WTC11 (cell line): ENCODE measurements at regions of chr21 and their contacts with region 1.

Region 1: GRCh38 chr21:36976882-36977651 is 10.6 kb upstream of the HLCS start:
- DNase-seq: peak; percentile 33
- ATAC-seq: peak; percentile 72
- H3K4me3 Mint-ChIP-seq: no peak overlapping the region
- H3K27ac Mint-ChIP-seq: no peak overlapping the region
- H3K4me1 Mint-ChIP-seq: peaks cover 16% of the 10 kb centered on the region
- H3K27me3 Mint-ChIP-seq: peaks cover 27% of the 10 kb centered on the region
- CTCF ChIP-seq: peak; percentile 34; the same call in 1 of the 2 replicates

Region 2: GRCh38 chr21:36917471-36918158 is 59.5 kb before region 1 on chr21:
- CTCF ChIA-PET with region 1: no interaction called
- POLR2A ChIA-PET with region 1: no interaction called
- DNase-seq: peak; percentile 43
- ATAC-seq: peak; percentile 81
- H3K4me3 Mint-ChIP-seq: no peak overlapping the region
- H3K27ac Mint-ChIP-seq: no peak overlapping the region
- H3K4me1 Mint-ChIP-seq: peaks cover 46% of the 10 kb centered on the region
- H3K27me3 Mint-ChIP-seq: no peaks in the 10 kb centered on the region
- CTCF ChIP-seq: 0 out of 2 replicates have a peak, but pooled peaks have one; percentile 14

Region 3: GRCh38 chr21:36966066-36966820 is 10.8 kb before region 1 on chr21 and contains the start of gene HLCS:
- CTCF ChIA-PET with region 1: interaction called, 21 read pairs
- POLR2A ChIA-PET with region 1: no interaction called
- DNase-seq: peak; percentile 73
- ATAC-seq: peak; percentile 90
- H3K4me3 Mint-ChIP-seq: peak within 1 kb of the TSS; percentile 75
- H3K27ac Mint-ChIP-seq: peak within 1 kb of the TSS; percentile 74
- H3K4me1 Mint-ChIP-seq: peaks cover 13% of the 10 kb centered on the region
- H3K27me3 Mint-ChIP-seq: no peaks in the 10 kb centered on the region
- CTCF ChIP-seq: no peak
- total RNA-seq, gene HLCS: 9.3 to 11.1 TPM (median 10.9 TPM) in 3 replicates

Region 4: GRCh38 chr21:36989699-36990507 is 12.8 kb after region 1 on chr21:
- CTCF ChIA-PET with region 1: interaction called, 48 read pairs
- POLR2A ChIA-PET with region 1: no interaction called
- DNase-seq: peak; percentile 92
- ATAC-seq: peak; percentile 87
- H3K4me3 Mint-ChIP-seq: peak overlapping the region; percentile 76
- H3K27ac Mint-ChIP-seq: peak overlapping the region; percentile 94
- H3K4me1 Mint-ChIP-seq: peaks cover 30% of the 10 kb centered on the region
- H3K27me3 Mint-ChIP-seq: peaks cover 18% of the 10 kb centered on the region
- CTCF ChIP-seq: peak; percentile 78

Region 5: DNA sequence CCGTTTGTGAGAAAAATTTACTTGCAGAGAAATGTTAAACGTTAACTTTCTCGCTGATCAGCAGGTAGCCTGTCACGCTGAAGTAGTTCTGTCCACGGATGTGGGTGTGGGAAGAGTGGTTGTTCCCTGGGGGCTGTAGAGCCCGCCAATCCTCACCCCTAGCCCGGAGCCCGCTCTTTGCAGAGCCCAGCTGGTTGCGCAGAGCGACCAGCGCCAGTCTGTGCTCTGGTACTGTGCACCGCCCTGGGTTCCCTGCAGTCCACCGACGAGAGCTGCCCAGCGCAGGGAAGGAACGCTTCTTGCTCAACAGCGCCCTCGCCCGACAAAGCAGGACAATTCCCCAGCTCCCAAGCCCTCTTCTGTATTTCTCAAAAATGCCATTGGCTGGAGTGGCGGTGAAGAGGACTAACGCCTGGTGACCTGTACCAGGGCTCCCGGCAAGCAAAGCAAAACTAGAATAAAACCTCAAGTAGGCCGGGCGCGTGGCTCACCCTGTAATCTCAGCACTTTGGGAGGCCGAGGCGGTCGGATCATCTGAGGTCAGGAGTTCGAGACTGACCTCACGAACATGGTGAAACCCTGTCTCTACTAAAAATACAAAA is 32.8 kb after region 1 on chr21:
- CTCF ChIA-PET with region 1: interaction called, 36 read pairs
- POLR2A ChIA-PET with region 1: no interaction called
- DNase-seq: peak; percentile 94
- ATAC-seq: peak; percentile 91
- H3K4me3 Mint-ChIP-seq: peak overlapping the region; percentile 50
- H3K27ac Mint-ChIP-seq: no peak overlapping the region
- H3K4me1 Mint-ChIP-seq: peaks cover 9% of the 10 kb centered on the region; the same call in 1 of the 2 replicates
- H3K27me3 Mint-ChIP-seq: peaks cover 57% of the 10 kb centered on the region
- CTCF ChIP-seq: peak; percentile 79

Region 6: DNA sequence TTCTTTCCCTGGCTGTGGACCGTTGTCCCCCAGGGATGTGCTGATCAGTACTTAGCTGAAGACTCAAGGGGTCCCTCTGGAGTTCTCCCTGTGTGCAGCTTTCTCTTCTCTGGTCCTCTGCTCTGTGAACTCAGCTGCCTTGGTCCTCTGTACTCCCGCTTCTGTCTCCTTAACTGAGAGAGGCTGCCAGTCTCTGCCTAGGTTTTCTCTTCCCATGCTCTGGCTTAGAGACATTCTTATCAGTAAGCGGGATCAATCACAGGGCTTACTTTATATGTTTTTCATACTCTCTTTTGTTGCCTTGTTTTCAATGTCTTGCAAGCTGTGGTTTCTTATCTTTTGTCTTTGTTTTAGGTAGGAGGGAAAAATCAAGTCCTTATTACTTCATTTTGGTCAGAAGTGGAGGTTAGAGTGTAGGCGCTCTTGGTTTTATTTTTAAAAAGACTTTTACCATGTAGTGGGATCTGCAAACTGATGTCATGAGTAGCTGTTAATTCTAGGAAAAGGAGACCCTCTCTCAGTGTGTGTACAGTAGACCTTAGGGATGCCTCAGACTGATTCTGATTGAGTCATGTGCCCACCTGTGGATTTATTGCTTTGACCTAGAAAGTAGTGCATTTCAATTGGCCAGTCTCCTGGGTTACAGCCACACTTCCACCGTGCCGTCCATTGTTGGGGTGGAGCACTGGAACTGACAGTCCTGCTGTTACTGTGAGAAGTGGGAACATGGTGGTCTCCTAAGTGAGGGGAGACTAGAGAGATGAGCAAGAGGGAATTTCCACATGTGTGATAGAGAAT is 142.6 kb after region 1 on chr21:
- CTCF ChIA-PET with region 1: interaction called, 19 read pairs
- POLR2A ChIA-PET with region 1: no interaction called
- DNase-seq: peak; percentile 37
- ATAC-seq: peak; percentile 100
- H3K4me3 Mint-ChIP-seq: no peak overlapping the region
- H3K27ac Mint-ChIP-seq: peak overlapping the region; percentile 32; the same call in 1 of the 2 replicates
- H3K4me1 Mint-ChIP-seq: peaks cover 6% of the 10 kb centered on the region
- H3K27me3 Mint-ChIP-seq: no peaks in the 10 kb centered on the region
- CTCF ChIP-seq: no peak

Region 7: DNA sequence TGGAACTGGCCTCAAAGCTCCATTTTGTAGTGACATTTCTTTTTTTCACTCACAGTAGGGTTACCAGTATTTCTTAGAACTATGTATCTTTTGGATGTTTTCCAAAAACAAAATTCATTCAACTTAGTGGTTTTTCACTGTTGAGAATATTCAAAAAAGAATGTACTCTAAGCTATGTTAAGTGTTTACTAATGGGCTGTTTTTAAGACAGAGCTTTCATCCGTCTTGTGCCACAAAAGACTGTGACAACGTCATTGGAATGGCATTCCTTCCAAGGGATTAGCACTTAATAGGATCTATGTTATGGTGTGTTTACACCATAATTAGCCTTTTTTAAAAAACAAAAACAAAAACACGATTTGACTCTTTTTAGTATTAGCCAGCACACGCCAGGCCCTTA is 162.8 kb after region 1 on chr21:
- CTCF ChIA-PET with region 1: interaction called, 12 read pairs
- POLR2A ChIA-PET with region 1: no interaction called
- DNase-seq: no peak
- ATAC-seq: no peak
- H3K4me3 Mint-ChIP-seq: no peak overlapping the region
- H3K27ac Mint-ChIP-seq: no peak overlapping the region
- H3K4me1 Mint-ChIP-seq: peaks cover under 1% of the 10 kb centered on the region
- H3K27me3 Mint-ChIP-seq: no peaks in the 10 kb centered on the region
- CTCF ChIP-seq: no peak